IMR-90 (cell line): ENCODE measurements at regions of chr1 and their contacts with region 1.

Region 1: GRCh38 chr1:71930556-71930955 is 351.8 kb downstream of the NEGR1 start:
- DNase-seq: peak; percentile 23
- ATAC-seq: no peak
- H3K4me3 ChIP-seq: no peak overlapping the region
- H3K27ac ChIP-seq: no peak overlapping the region
- H3K4me1 ChIP-seq: peaks cover 2% of the 10 kb centered on the region; the same call in 1 of the 2 replicates
- H3K27me3 ChIP-seq: no peaks in the 10 kb centered on the region
- CTCF ChIP-seq: no peak
- POLR2A ChIP-seq: no peak
- RAD21 ChIP-seq: no peak

Region 2: GRCh38 chr1:71521655-71522264 is 408.8 kb before region 1 on chr1:
- CTCF ChIA-PET with region 1: no interaction called
- POLR2A ChIA-PET with region 1: no interaction called
- dilution Hi-C with region 1: no loop called
- in situ Hi-C with region 1: no loop called
- intact Hi-C with region 1: no loop called
- DNase-seq: peak; percentile 43
- ATAC-seq: peak; percentile 78
- H3K4me3 ChIP-seq: no peak overlapping the region
- H3K27ac ChIP-seq: no peak overlapping the region
- H3K4me1 ChIP-seq: no peaks in the 10 kb centered on the region
- H3K27me3 ChIP-seq: no peaks in the 10 kb centered on the region
- CTCF ChIP-seq: peak; percentile 71
- POLR2A ChIP-seq: no peak
- RAD21 ChIP-seq: peak; percentile 73

Region 3: GRCh38 chr1:71881611-71882010 is 48.9 kb before region 1 on chr1:
- CTCF ChIA-PET with region 1: no interaction called
- POLR2A ChIA-PET with region 1: no interaction called
- dilution Hi-C with region 1: no loop called
- in situ Hi-C with region 1: no loop called
- intact Hi-C with region 1: loop called (anchors 5 kb)
- DNase-seq: peak; percentile 44
- ATAC-seq: no peak
- H3K4me3 ChIP-seq: no peak overlapping the region
- H3K27ac ChIP-seq: no peak overlapping the region
- H3K4me1 ChIP-seq: no peaks in the 10 kb centered on the region
- H3K27me3 ChIP-seq: no peaks in the 10 kb centered on the region
- CTCF ChIP-seq: no peak
- POLR2A ChIP-seq: no peak
- RAD21 ChIP-seq: no peak

Region 4: DNA sequence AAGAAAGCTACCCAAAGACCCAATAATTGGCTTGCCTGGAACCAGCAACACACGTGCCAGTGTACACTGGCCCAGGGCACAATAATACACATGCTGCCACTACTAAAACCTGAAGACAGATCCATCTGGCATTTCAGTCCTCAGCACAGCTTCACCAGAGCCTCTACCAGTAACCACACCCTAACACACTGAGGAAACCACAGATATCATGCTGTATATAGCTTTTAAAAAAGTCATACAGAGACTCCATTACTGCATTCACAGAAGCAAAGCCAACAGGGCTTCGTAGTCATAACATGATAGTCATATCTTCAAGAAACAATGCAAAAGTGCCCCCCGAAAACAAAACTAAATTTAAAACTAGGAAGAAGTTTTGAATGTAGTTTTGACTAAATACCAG is 392.4 kb after region 1 on chr1:
- CTCF ChIA-PET with region 1: no interaction called
- POLR2A ChIA-PET with region 1: no interaction called
- dilution Hi-C with region 1: no loop called
- in situ Hi-C with region 1: no loop called
- intact Hi-C with region 1: no loop called
- DNase-seq: no peak
- ATAC-seq: no peak
- H3K4me3 ChIP-seq: no peak overlapping the region
- H3K27ac ChIP-seq: no peak overlapping the region
- H3K4me1 ChIP-seq: no peaks in the 10 kb centered on the region; the same call in 1 of the 2 replicates
- H3K27me3 ChIP-seq: no peaks in the 10 kb centered on the region
- CTCF ChIP-seq: no peak
- POLR2A ChIP-seq: no peak
- RAD21 ChIP-seq: no peak